ENCODE measurements at regions of chr14 and their contacts with region 1.

Region 1: GRCh38 chr14:64294672-64295413 is 672 bp upstream of the ESR2 start:
- DNase-seq: peak; percentile 76 to 99 (median 86)
- ATAC-seq: peak; percentile 94 to 98 (median 97)
- H3K4me3 ChIP-seq: peak overlapping the region in 3 of 4 donors; percentile 8 to 48 (median 40)
- H3K27ac ChIP-seq: no peak overlapping the region
- H3K4me1 ChIP-seq: peaks cover 0 to 6% (median 0%) of the 10 kb centered on the region in 3 donors
- H3K27me3 ChIP-seq: peaks cover 0 to 7% (median 0%) of the 10 kb centered on the region in 4 donors
- CTCF ChIP-seq: peak; percentile 73 to 83 (median 77)

Region 2: GRCh38 chr14:63795532-63795931 is 499.3 kb before region 1 on chr14:
- intact Hi-C with region 1: loop called in 1 of 3 experiments (anchors 10 kb)
- DNase-seq: no peak
- ATAC-seq: no peak
- H3K4me3 ChIP-seq: no peak overlapping the region
- H3K27ac ChIP-seq: no peak overlapping the region
- H3K4me1 ChIP-seq: no peaks in the 10 kb centered on the region
- H3K27me3 ChIP-seq: no peaks in the 10 kb centered on the region
- CTCF ChIP-seq: no peak

Region 3: GRCh38 chr14:64123241-64123822 is 171.5 kb before region 1 on chr14:
- intact Hi-C with region 1: loop called in 1 of 3 experiments (anchors 10 kb)
- DNase-seq: peak in 3 of 6 donors; percentile 23 to 38 (median 27)
- ATAC-seq: peak; percentile 29 to 79 (median 56)
- H3K4me3 ChIP-seq: no peak overlapping the region
- H3K27ac ChIP-seq: no peak overlapping the region
- H3K4me1 ChIP-seq: peaks cover 0 to 8% (median 0%) of the 10 kb centered on the region in 3 donors
- H3K27me3 ChIP-seq: no peaks in the 10 kb centered on the region
- CTCF ChIP-seq: no peak

Region 4: DNA sequence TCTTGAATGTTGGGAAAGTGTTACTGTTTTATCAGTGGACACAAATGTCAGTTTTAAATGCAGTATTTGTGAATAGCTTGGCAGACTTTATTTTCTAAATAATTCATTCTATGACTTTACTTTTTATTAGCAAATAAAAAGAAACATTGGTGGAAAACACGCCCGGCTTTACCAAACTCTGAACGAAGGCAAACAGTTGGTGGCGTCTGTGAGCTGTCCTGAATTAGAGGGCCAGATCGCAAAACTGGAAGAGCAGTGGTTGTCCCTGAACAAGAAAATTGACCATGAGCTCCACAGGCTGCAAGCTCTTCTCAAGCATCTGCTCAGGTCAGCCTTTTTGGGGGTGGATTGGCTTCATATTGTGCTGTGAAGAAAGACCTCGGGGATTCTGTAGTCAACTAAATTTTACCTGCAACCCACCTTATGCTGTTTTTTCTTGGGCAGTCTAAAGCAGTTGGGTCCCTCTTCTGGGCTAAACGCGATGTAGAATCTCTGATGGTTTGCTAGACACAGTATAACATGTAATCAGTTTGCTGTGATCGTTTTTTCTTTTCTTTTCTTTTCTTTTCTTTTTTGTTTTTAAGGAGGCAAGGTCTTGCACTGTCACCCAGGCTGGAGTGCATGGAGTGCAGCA is 157.1 kb before region 1 on chr14:
- intact Hi-C with region 1: loop called in 1 of 3 experiments (anchors 5 kb)
- DNase-seq: peak in 2 of 6 donors; percentile 28 to 40
- ATAC-seq: peak in 3 of 4 donors; percentile 71 to 92 (median 91)
- H3K4me3 ChIP-seq: no peak overlapping the region
- H3K27ac ChIP-seq: no peak overlapping the region
- H3K4me1 ChIP-seq: no peaks in the 10 kb centered on the region
- H3K27me3 ChIP-seq: no peaks in the 10 kb centered on the region
- CTCF ChIP-seq: peak in 1 of 4 donors; percentile 23

Measured in pancreas (tissue), 10 donors.